Psoas muscle (tissue), 8 donors: ENCODE measurements at regions of chr17 and their contacts with region 1.

Region 1: DNA sequence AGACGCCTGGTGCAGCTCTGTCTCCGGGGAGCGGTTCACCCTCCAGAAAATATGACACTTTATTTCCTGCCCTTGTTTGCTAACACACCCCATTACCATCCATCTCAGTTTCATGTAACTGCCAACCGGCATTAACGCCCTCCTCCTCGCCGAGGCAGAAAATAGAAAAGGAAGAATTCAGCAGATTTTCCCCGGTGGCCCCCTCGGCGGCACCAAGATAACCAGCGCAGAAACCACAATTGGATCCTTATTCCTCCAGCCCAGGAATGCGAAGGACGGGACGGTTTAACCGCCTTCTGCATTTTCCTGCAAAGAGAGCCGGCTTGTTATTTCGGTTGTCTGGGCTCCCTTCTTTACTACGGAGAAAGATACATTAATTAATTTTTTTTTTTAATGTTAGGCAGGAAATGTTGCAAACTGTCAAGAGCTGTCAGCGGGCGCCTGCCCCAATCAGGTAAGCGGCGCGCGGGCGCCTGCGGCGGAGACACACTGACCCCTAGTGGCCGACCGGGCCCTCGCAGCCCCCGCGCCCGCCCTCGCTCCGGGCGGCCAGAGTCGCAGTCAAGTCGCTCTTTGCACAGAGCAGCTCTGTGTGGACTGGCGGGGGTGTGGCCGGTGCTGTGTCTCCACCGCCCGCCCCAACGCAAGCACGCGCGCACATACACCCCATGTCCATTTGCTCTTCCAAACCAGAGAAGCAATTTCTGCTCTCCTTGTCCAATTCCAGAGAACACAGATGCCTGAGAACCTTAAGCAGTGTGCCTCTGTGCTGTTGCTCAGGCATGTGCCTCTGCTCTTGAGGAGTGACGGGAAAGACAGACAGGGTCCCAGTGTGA is 53.6 kb downstream of the C17orf67 start:
- DNase-seq: peak; percentile 75 to 86
- ATAC-seq: peak; percentile 82 to 92 (median 86)
- H3K4me3 ChIP-seq: peak overlapping the region; percentile 53
- H3K27ac ChIP-seq: no peak overlapping the region
- H3K4me1 ChIP-seq: peaks cover 25% of the 10 kb centered on the region
- H3K27me3 ChIP-seq: no peaks in the 10 kb centered on the region
- CTCF ChIP-seq: peak; percentile 99

Region 2: DNA sequence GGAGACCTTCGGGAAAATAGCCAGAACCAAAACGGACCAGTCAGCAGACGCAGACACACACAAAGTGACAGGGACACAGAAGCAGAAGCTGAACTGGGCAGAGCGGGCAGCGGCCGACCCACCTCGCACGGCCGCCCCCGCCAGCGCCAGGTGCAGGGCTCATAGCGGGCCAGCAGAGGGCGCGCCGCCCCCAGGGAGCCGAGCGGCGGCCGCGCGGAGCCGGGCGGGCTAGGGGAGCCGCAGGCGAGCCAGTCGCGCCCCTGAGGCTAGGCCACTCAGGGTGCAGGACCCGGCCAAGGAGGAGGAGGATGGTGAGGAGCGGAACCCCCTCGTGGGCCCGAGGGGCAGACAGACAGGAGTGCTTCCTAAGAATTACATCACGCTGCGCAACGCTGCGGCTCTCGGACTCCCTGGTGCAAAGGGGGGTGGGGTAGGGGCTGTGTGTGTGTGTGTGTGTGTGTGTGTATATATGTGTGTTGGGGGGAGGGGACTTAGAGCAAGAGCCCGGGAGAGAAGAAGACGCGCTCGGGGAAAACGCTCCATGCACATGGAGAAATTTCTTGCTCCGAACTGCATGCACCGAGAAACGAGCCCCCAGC is 187.5 kb before region 1 on chr17:
- intact Hi-C with region 1: loop called (anchors 1 to 5 kb)
- DNase-seq: peak; percentile 68 to 79
- ATAC-seq: peak; percentile 76 to 82 (median 80)
- H3K4me3 ChIP-seq: peak overlapping the region; percentile 81
- H3K27ac ChIP-seq: no peak overlapping the region
- H3K4me1 ChIP-seq: peaks cover 22% of the 10 kb centered on the region
- H3K27me3 ChIP-seq: peaks cover 0 to 1% (median 0%) of the 10 kb centered on the region in 3 donors
- CTCF ChIP-seq: peak; percentile 100

Region 3: GRCh38 chr17:56679115-56679766 is 100.9 kb before region 1 on chr17:
- intact Hi-C with region 1: loop called (anchors 5 kb)
- DNase-seq: peak in 1 of 2 donors; percentile 32
- ATAC-seq: peak in 3 of 4 donors; percentile 47 to 81 (median 60)
- H3K4me3 ChIP-seq: peak overlapping the region; percentile 61
- H3K27ac ChIP-seq: no peak overlapping the region
- H3K4me1 ChIP-seq: no peaks in the 10 kb centered on the region
- H3K27me3 ChIP-seq: peaks cover 0 to 15% (median 2%) of the 10 kb centered on the region in 3 donors
- CTCF ChIP-seq: peak; percentile 57

Region 4: DNA sequence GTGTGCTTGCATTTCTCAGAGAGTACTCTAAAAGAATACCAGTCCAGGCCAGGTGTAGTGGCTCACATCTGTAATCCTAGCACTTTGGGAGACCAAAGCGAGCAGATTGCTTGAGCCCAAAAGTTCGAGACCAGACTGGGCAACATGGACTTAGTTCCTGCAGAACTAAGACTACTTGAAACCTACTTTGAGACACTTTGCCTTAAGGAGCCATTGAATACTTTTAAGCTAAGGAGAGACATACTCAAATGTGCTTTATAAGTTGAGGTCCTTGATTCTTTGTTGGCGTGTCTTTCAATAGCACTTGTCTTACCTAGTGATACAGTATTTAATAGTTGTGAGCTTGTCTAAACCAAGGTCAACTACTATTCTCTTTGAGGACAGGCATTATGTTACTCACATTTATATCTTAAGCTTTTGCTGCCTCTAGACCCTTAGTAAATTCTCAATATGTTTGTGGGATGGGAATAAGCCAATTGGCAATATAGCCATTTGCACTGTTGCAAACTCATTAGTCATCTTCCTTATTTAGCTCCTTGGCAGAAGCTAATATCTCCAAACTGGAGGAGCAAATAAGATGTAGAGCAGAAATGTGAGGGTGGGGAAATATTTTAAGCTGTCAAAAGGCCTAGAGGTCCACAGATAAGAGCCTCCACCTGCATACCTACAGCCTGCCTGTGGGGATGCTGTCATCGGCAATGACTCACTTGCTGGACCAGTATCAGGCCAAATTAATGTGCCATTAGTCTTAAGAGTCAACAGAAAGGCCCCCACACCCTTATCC is 214.1 kb after region 1 on chr17:
- intact Hi-C with region 1: no loop called
- DNase-seq: no peak
- ATAC-seq: peak; percentile 69 to 88 (median 76)
- H3K4me3 ChIP-seq: no peak overlapping the region
- H3K27ac ChIP-seq: peak overlapping the region; percentile 47
- H3K4me1 ChIP-seq: peaks cover 10% of the 10 kb centered on the region
- H3K27me3 ChIP-seq: no peaks in the 10 kb centered on the region
- CTCF ChIP-seq: no peak